ENCODE measurements at regions of chr1 and their contacts with region 1.

Region 1: DNA sequence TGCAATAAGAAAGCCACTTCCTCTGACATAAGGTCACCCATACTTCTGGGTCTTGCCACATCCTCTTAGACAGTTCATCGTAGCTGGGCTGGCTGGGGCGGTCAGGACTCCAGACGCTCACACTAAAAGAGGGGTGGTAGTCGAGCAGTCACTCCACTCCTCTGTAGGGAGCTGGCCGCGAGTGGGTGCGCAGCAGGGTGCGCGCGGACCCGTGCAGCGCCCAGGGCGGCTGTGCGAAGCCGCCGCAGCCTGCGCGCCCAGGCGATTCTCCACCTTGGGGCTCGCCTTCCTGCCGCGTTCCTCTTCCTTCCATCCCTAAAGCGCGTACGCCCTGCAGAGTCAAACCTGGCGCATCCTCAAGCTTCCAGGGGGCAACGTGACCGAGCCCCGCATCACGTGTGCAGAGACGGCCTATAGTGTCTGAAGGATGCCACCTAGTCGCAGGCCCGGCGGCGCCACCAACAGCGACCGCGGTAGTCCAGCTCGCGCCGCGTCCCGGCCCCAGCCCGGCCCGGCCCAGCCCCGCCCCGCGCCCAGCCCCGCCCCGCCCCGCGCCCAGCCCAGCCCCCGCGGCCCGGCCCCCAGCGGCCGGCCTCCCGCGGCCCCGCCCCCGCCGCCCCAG is 360 bp upstream of the PRDX6 start:
- DNase-seq: peak; percentile 96
- H3K4me3 ChIP-seq: peak overlapping the region; percentile 85 to 95 (median 93)
- H3K27ac ChIP-seq: peak overlapping the region; percentile 97 to 100 (median 100)
- H3K4me1 ChIP-seq: peaks cover 60 to 79% (median 75%) of the 10 kb centered on the region in 4 donors
- H3K27me3 ChIP-seq: no peaks in the 10 kb centered on the region
- CTCF ChIP-seq: no peak
- EP300 ChIP-seq: no peak
- POLR2A ChIP-seq: peak; percentile 18

Region 2: GRCh38 chr1:173451981-173452380 is 24.8 kb before region 1 on chr1:
- intact Hi-C with region 1: loop called (anchors 2 kb)
- DNase-seq: no peak
- H3K4me3 ChIP-seq: no peak overlapping the region
- H3K27ac ChIP-seq: peak overlapping the region; percentile 79 to 85 (median 84)
- H3K4me1 ChIP-seq: peaks cover 0 to 63% (median 37%) of the 10 kb centered on the region in 4 donors
- H3K27me3 ChIP-seq: no peaks in the 10 kb centered on the region
- CTCF ChIP-seq: no peak
- EP300 ChIP-seq: peak; percentile 24
- POLR2A ChIP-seq: no peak

Measured in esophagus muscularis mucosa (tissue), 4 donors.